PC-9 (cell line): ENCODE measurements at regions of chr2 and their contacts with region 1.

Region 1: DNA sequence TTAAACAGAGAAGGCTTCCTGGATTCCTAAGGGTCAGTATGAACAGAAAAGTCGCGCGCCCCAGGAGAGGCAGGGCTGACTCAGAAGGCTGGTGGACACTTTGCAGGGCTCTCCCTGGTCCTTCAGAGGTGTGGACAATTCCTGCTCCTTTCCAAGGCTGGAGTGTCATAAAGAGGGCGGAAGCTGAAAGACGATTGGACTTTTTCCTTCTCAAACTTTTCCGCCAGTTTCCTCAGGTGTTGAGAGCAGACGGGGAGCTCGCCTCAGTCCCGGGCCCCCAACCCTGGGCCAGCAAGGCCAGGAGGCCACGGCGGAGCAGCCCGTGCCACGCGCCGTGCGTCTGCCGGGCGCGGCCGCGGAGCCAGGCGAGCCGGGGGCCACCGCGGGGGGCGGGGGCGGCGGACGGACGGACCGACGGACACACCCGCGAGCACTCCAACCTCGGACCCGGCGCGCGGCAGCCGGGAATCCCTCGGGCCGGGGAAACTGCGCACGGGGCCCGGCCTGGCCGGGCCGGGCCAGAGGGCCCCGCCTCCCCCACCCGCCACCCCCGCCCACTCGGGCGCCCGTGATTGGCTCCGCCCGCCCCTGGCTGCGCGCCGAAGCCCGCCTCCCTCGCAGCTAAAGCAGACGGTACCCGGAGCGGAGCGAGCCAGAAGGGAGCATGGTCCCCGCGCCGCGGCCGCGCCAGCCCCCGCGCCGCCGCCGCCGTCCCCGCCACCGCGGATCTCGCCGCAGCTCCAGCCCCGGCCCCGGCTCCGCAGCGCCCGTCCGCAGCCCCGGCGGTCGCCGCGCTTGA is at the start of gene KLHL29:
- DNase-seq: peak; percentile 70 to 79
- H3K4me3 ChIP-seq: peak within 1 kb of the TSS; percentile 83
- H3K27ac ChIP-seq: peak within 1 kb of the TSS; percentile 35
- H3K4me1 ChIP-seq: peaks cover 34% of the 10 kb centered on the region
- H3K27me3 ChIP-seq: no peaks in the 10 kb centered on the region
- CTCF ChIP-seq: no peak
- total RNA-seq, gene KLHL29: 3.1 and 3.4 TPM in 2 replicates

Region 2: DNA sequence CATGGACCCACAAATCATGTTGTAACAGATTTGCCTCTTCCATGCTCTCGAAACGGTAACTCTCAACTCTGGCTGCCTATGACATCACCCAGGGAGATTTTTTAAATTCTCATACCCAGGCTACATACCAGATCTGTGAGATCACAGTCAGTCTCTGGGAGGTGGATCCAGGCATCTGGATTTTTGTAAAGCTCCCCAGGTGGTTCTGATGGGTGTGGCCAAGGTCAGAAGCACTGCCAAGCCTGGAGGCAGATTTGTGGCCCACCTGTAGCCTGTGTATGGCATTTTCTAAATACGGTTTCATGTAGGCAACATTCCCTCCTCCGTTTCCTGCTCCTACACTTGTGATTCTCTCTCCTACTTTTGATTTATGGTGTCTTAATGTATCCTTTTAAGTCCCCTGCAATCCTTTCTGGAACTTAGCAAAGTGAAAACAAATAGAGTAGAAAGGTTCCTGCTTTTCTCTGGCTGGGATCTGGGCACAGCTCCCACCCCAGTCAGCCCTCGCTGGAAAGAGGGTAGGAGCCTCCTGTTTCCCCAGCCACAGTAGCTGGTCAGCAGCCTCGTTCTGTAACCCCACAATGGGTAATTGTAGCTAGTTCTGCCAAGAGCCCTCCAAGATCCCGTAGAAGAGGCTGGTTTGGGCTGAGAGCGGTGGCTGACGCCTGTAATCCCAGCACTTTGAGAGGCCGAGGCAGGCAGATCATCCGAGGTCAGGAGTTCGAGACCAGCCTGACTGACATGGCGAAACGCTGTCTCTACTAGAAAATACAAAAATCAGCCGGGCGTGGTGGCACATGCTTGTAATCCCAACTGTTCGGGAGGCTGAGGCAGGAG is 96.5 kb after region 1 on chr2:
- CTCF ChIA-PET with region 1: no interaction called
- POLR2A ChIA-PET with region 1: no interaction called
- intact Hi-C with region 1: loop called (anchors 2 kb)
- DNase-seq: peak; percentile 79 to 94
- H3K4me3 ChIP-seq: no peak overlapping the region
- H3K27ac ChIP-seq: peak overlapping the region; percentile 78
- H3K4me1 ChIP-seq: peaks cover 19% of the 10 kb centered on the region
- H3K27me3 ChIP-seq: no peaks in the 10 kb centered on the region
- CTCF ChIP-seq: no peak

Region 3: GRCh38 chr2:23900927-23901322 is 516.2 kb after region 1 on chr2:
- CTCF ChIA-PET with region 1: no interaction called
- POLR2A ChIA-PET with region 1: no interaction called
- intact Hi-C with region 1: loop called (anchors 5 kb)
- DNase-seq: peak in 1 of 2 experiments; percentile 89
- H3K4me3 ChIP-seq: peak overlapping the region; percentile 46; the same call in 1 of the 2 replicates
- H3K27ac ChIP-seq: peak overlapping the region; percentile 93
- H3K4me1 ChIP-seq: peaks cover 60% of the 10 kb centered on the region
- H3K27me3 ChIP-seq: no peaks in the 10 kb centered on the region
- CTCF ChIP-seq: no peak

Region 4: DNA sequence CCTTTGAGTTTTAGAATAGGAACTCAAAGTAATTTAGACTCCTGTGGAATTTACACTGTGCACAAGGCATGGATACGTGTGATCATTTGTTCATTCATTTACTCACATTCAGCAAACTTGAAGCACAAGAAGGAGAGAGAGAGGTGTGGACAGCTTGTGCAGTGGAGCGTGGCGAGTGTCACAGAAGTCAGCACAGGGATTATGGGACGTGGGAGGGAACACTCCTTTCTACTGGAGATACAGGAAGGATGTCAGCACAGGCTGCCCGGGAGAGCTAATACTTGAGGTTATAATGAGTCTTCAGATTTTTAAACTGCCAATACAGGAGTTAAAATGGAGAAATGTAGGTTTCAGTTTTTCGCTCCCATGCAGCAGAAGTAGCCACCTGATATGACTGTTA is 797.1 kb after region 1 on chr2:
- CTCF ChIA-PET with region 1: no interaction called
- POLR2A ChIA-PET with region 1: no interaction called
- intact Hi-C with region 1: no loop called
- DNase-seq: no peak
- H3K4me3 ChIP-seq: no peak overlapping the region
- H3K27ac ChIP-seq: no peak overlapping the region
- H3K4me1 ChIP-seq: no peaks in the 10 kb centered on the region
- H3K27me3 ChIP-seq: no peaks in the 10 kb centered on the region
- CTCF ChIP-seq: no peak